ENCODE measurements at regions of chr7 and their contacts with region 1.

Region 1: DNA sequence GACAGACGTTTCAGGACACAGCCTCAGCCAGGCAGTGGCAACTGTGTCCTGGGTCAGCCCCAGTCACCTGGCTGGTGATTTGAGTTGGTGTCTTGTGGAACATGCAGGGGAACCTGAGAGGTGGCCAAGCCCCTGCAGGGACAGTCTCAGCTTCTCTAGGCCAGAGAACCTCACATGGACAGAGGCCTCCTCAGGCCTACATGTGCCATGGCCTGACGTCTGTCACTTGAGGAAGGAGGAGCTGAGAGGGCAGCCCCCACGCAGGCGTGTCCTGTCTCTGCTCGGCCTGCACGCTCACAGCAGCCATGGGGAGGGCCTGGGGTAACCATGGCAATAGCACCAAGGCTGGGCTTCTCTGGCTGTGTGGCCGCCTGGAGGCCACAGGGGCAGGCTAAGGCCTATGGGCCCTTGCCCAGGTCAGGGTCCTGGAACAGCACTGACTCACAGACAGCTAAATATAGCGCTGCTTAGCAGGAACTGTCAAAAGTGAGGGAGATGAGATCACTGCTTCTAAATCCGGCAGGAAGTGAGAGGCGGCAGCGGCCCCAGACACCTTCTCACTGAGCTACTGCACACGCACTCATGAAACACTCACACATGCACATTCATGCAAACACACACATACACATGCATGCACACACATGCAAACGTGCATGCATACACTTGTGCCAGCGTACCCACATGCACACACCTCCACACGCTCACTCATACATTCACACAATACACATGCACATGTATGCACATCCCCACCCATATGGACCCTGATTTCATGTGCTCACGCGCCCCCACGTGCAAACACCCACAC is 57.0 kb downstream of the YKT6 start:
- DNase-seq: peak; percentile 91

Region 2: GRCh38 chr7:44291066-44291732 is 33.4 kb after region 1 on chr7:
- intact Hi-C with region 1: loop called (anchors 5 kb)
- DNase-seq: peak; percentile 89

Region 3: GRCh38 chr7:44307301-44307900 is 49.6 kb after region 1 on chr7:
- intact Hi-C with region 1: loop called (anchors 1 kb)
- DNase-seq: peak; percentile 82

Region 4: DNA sequence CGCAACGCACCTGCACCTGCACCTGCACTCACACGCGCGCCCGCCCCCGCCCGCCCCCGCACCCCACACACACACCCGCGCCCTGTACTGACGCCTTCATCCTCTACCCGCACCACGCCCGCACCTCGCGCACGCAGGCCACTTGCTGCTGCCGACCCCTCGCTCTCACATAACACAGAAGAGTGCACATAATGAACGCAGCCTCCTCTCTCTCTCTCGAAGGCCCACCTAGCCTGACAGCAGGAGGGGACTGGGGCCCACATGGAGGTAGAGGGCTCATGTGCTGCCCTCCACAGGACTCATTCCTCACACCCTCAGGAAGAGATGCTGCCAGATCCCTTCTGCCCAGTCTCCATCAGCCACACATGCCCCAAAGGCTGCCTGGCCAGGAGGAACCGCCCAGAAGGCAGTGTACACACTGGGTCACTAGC is 68.0 kb after region 1 on chr7:
- intact Hi-C with region 1: loop called (anchors 2 kb)
- DNase-seq: peak; percentile 76